GM18951 (cell line): ENCODE measurements at regions of chr3 and their contacts with region 1.

Region 1: DNA sequence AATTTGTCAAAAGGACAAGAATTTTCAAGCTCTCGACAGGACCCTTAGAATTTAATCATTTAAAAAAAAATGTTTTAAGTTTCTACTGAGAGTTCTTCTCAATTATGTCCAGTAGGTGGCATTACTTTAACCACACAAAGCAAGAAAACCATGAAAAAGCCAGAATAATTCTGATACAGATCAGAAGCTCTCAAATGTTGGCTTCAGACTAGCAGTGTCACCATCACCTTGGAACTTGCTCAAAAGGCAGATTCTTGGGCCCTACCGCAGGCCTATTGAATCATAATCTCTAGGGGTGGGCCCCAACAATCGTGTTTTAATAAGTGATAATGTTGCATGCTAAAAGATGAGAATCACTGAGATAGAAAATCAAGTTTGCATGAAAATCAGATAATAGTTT is 99.5 kb upstream of the KCNMB2 start:
- POLR2A ChIP-seq: no peak

Region 2: DNA sequence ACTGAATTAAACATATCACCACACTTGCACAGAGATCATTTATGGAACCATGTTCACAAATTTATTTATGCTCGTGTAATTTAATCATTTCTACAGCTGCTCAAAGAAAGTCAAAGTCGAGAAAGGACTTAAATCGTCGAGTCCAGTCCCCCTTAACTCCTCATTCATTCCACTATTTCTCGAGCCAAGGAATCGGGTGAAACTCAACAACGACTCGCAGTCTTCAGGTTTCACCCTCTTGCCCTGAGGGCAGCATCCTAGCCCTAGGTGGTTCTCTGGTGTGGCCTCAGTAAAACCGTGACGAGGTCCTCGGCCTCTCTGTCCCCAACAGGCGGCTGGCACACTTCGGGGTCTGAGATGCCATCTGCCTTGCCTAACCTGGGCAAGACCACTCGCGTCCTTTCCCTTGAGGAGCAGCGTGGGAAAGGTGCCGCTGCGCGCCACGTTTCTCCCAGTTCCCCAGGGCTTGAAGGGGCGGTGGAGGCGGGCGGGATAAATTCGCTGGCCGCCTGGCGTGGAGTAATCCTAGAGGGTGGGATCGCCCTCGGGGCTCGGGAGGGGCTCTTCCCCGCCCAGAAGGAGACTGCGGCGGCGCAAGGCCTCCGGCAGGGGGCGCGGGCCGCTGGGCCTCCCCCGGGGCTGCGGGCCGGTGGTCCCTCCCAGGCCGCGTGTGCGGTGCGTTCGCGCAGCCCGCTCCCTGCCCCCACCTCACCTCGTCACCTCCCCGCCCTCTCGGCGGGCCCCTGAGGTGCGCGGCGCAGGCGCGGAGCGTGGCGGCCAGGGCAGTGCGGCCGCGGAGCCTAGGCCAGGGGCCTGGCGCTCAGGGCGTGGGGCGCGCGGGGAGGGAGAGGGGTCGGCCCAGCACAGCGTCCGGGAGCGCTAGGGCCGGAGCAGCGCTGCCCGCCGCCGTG is 885.8 kb after region 1 on chr3 and contains the start of gene ZNF639:
- in situ Hi-C with region 1: loop called (anchors 25 kb)
- POLR2A ChIP-seq: peak; percentile 78